Activated T-helper 2 cell treated with anti-CD3 and anti-CD28 coated beads, Interferon-gamma antibody, Interleukin-2, Interleukin-4, amounts not matched to agents 10 μg/mL and 5 μg/mL and 100 μg/mL, durations not matched to agents 14 hours and 24 hours and 36 hours (primary cell): ENCODE measurements at regions of chr19 and their contacts with region 1.

Region 1: DNA sequence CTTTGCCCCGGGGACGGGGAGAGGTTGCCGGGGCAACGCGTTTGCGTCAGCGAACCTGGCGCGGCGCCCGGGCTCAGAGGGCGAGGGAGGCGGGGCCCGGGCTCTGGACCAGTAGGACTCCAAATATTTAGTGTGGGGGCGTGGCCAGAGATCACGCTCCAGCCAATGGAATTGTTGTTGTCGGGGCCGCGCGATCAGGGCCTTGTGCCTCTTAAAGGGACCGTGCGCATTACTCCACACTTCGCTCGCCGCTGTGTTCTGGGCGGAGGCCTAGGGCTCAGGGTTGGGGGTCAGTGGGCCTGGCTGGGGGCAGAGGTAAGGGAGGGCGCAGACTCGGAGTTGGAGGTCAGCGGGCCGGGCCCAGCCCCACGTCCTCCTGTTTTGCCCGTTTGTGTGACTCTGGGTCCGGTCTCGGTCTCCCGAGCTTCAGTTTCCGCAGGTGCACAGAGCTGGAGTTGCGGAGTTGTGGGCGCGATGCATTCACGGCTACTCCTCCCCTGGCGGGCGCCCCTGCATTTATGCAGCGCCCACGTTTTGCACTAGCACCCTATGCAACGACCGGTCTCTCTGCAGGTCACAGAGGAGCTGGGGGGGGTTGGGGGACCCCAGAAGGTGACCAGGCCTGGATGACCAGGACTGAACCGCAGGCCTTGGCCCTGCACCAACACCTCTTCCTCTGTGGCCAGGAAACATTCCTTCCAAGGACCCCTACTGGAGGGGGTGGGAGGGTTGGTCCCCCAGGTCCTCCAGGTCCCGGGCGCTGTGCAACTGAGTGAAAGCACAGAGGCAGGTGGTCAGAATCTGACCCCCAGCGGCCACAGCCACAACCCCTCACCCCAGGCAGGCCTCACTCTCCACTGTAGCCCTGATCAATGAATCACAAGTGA is 10.7 kb upstream of the MKNK2 start:
- DNase-seq: peak; percentile 98
- H3K4me3 Mint-ChIP-seq: peak overlapping the region; percentile 87
- H3K27ac Mint-ChIP-seq: peak overlapping the region; percentile 86
- H3K4me1 Mint-ChIP-seq: peaks cover 21% of the 10 kb centered on the region
- H3K27me3 Mint-ChIP-seq: no peaks in the 10 kb centered on the region

Region 2: GRCh38 chr19:2050991-2051772 is 10.6 kb before region 1 on chr19 and contains the start of gene MKNK2:
- intact Hi-C with region 1: loop called (anchors 1 kb)
- DNase-seq: peak; percentile 91
- H3K4me3 Mint-ChIP-seq: peak within 1 kb of the TSS; percentile 82
- H3K27ac Mint-ChIP-seq: peak within 1 kb of the TSS; percentile 86
- H3K4me1 Mint-ChIP-seq: peaks cover 25% of the 10 kb centered on the region
- H3K27me3 Mint-ChIP-seq: no peaks in the 10 kb centered on the region
- total RNA-seq, gene MKNK2: 161 and 176 TPM in 2 replicates